ENCODE measurements at regions of chr6 and their contacts with region 1.

Region 1: DNA sequence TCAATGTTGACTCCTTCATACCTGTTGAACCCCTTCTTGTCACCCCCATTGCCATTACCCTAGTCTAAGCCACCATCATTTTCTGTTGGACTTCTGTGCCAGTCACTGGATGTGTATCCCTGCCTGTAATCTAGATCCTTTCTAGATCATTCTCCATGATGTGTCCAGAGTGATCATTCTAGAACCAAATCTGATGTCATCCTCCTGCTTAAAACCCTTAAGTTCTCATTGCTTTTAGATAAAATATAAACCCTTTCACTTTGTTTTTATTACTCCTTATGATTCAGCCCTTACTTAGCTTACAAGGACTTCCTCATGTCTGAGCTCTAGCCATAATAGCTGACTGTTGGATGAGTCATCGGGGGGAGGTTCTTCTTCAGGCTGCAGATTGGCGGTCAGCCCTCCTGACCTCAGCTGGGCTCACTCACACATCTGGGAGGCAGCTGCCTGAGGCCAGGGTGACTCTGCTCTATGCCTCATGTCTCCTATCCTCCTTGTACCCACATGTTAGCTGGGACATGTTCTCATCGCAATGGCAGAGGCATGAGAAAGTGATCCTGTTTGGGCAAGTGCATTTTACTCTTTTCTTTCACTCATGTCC is 287.6 kb downstream of the ESR1 start:
- DNase-seq: peak; percentile 94
- ATAC-seq: peak; percentile 81
- H3K4me3 ChIP-seq: no peak overlapping the region
- H3K27ac ChIP-seq: peak overlapping the region; percentile 58
- H3K4me1 ChIP-seq: peaks cover 66% of the 10 kb centered on the region
- H3K27me3 ChIP-seq: no peaks in the 10 kb centered on the region
- CTCF ChIP-seq: no peak

Region 2: DNA sequence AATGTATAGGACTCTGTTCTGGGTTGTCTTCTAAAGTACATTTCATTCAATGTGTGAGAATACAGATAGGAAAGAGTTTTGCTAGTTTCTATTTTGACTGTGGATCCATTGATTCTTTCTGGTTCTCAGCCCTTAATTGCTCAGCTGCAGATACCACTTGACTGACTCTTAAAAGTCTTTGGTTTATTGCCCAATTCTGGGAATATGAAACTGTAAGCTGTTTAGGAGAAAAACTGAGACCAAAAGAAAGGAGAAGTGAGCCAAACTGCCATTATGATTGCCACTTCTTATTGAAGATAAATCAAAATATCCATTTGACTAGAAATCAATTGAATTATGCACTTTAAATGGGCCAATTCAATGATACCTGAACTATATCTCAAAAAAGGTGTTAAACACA is 76.2 kb before region 1 on chr6:
- CTCF ChIA-PET with region 1: no interaction called
- POLR2A ChIA-PET with region 1: no interaction called
- intact Hi-C with region 1: no loop called
- DNase-seq: no peak
- ATAC-seq: no peak
- H3K4me3 ChIP-seq: no peak overlapping the region
- H3K27ac ChIP-seq: no peak overlapping the region
- H3K4me1 ChIP-seq: no peaks in the 10 kb centered on the region
- H3K27me3 ChIP-seq: no peaks in the 10 kb centered on the region
- CTCF ChIP-seq: no peak

Region 3: DNA sequence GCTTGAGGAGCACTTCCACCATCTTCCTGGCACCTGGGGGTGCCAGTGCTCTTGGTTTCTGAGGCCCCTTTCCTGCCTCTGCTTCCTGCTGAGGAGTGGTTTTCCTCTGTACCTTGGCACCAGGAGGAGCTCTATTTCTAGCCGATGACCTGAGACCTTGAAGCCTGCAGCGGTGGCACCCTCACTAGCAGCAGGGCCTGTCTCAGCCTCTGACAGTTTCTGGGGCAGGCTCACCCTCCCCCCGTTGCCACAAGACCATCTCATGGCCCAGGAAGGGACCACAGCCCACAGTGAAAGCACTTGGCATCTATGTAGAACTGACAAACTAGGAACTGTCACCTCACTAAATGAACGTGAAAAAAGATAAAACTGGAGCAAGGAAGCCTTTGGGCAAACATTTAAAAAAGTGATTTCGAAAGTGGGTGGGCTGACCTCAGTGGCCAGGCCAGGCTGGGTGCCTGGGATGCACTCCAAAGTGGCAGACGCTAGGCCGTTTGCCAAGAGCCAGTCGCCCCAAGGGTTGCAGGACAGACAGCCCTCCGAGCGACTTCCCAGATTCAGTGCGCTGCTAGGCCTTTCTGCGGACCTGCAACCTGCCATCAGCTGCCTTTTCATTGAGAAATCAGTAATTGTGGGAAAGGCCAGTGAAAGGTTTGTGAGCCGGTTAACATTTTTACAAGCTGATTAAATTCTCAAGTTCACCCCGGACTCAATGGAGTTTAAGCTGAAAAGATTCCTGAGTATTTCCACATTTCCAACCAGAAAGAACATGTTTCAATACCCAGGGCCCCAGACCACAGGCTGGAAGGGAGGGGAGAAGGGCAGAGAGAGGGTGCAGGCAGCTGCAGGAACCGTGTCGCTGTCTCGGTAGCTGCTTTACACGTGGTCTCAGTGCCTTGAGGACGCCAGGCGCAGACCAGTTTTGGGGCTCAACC is 16.1 kb after region 1 on chr6:
- CTCF ChIA-PET with region 1: no interaction called
- POLR2A ChIA-PET with region 1: interaction called, 16 read pairs
- intact Hi-C with region 1: no loop called
- DNase-seq: no peak
- ATAC-seq: no peak
- H3K4me3 ChIP-seq: no peak overlapping the region
- H3K27ac ChIP-seq: no peak overlapping the region
- H3K4me1 ChIP-seq: no peaks in the 10 kb centered on the region
- H3K27me3 ChIP-seq: no peaks in the 10 kb centered on the region
- CTCF ChIP-seq: no peak

Region 4: DNA sequence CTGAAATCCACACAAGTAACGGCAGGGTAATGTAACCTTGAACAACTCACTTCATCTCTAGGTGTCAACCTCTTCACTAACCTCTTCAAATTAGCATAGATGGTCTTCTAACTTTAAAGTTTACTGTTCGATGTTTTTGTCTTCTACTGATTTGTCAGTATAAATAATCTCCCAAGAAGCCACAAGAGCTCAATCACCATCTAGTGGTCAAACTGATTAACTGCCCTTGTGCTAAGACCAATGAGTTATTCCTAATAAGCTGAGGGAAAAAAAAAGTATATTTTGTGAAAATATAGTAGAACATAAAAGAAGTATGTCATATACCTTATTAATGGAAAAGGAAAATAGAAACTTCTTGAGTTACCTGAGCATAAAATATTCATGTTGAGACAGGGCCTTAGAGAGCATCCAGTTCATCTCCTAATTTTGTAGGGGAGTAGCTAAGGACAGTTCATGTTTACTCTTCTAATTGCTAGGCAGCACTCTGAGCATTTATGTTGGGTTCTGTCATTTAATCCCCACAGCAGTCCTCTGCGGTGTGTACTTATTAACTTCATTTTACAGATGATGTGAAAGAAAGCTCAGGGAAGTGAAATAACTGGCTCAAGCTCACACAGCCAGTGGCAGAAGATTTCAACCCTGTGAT is 29.5 kb after region 1 on chr6:
- CTCF ChIA-PET with region 1: interaction called, 4 read pairs
- POLR2A ChIA-PET with region 1: no interaction called
- intact Hi-C with region 1: loop called (anchors 1 kb)
- DNase-seq: peak; percentile 78
- ATAC-seq: no peak
- H3K4me3 ChIP-seq: no peak overlapping the region
- H3K27ac ChIP-seq: no peak overlapping the region
- H3K4me1 ChIP-seq: peaks cover 10% of the 10 kb centered on the region
- H3K27me3 ChIP-seq: no peaks in the 10 kb centered on the region
- CTCF ChIP-seq: peak; percentile 83

Region 5: DNA sequence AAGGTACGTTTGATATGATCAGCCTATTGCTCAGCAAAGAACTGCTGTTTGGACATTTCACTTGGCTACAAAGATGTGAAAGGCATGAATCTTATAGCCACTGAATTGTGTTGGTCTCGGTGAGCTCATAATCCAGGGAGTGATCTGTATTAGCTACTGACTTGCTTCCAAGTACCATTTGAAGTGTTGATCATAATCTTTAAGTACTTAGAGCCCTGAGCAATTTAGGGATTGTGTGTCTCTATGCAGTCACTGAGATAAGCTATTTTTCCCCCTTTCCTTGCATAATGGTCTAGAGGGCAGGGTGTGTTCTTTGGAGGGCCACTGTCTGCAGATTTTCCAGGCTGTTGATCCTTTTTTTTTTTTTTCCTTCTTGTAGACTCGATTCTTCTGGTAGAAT is 106.0 kb after region 1 on chr6:
- CTCF ChIA-PET with region 1: no interaction called
- POLR2A ChIA-PET with region 1: no interaction called
- intact Hi-C with region 1: loop called (anchors 5 kb)
- DNase-seq: no peak
- ATAC-seq: no peak
- H3K4me3 ChIP-seq: no peak overlapping the region
- H3K27ac ChIP-seq: no peak overlapping the region
- H3K4me1 ChIP-seq: no peaks in the 10 kb centered on the region
- H3K27me3 ChIP-seq: no peaks in the 10 kb centered on the region
- CTCF ChIP-seq: no peak

Region 6: DNA sequence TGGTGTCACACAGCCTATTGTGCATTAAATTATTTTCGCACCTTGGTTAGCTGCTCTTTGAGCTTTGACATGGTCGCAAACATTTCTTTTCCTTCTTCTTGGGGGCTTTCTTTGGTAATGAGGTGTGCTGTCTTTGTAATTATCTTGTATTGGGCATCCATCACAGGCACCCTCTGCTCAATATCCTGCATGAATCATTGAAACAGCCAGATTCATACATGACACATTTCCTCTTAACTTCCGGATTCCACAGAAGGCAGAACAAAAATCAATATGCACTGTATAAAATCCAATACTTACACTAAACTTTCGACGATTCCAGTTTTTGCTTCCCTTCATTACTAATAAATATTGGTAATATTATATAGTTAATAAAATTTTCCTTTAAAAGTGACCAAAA is 366.5 kb after region 1 on chr6:
- CTCF ChIA-PET with region 1: no interaction called
- POLR2A ChIA-PET with region 1: no interaction called
- intact Hi-C with region 1: no loop called
- DNase-seq: peak; percentile 39
- ATAC-seq: peak; percentile 63
- H3K4me3 ChIP-seq: no peak overlapping the region
- H3K27ac ChIP-seq: no peak overlapping the region
- H3K4me1 ChIP-seq: peaks cover 5% of the 10 kb centered on the region
- H3K27me3 ChIP-seq: no peaks in the 10 kb centered on the region; the same call in 1 of the 2 replicates
- CTCF ChIP-seq: no peak

Measured in PC-3 (cell line).